ENCODE measurements at regions of chr16 and their contacts with region 1.

Region 1: GRCh38 chr16:67537270-67537635 is 8.6 kb downstream of the RIPOR1 start:
- DNase-seq: peak in 4 of 5 donors; percentile 37 to 71 (median 49)
- H3K4me3 ChIP-seq: peak overlapping the region; percentile 60
- H3K4me3 Mint-ChIP-seq: peak overlapping the region; percentile 85 to 93 (median 86)
- H3K27ac ChIP-seq: peak overlapping the region; percentile 47
- H3K27ac Mint-ChIP-seq: peak overlapping the region; percentile 74 to 92 (median 91)
- H3K4me1 ChIP-seq: peaks cover 24% of the 10 kb centered on the region
- H3K4me1 Mint-ChIP-seq: peaks cover 22 to 44% (median 27%) of the 10 kb centered on the region in 3 donors
- H3K27me3 ChIP-seq: no peaks in the 10 kb centered on the region
- H3K27me3 Mint-ChIP-seq: peaks cover 0 to 6% of the 10 kb centered on the region in 2 donors

Region 2: GRCh38 chr16:66444049-66444481 is 1093.2 kb before region 1 on chr16:
- CTCF ChIA-PET with region 1: no interaction called
- POLR2A ChIA-PET with region 1: interaction called, 15 read pairs
- DNase-seq: no peak
- H3K4me3 ChIP-seq: no peak overlapping the region
- H3K4me3 Mint-ChIP-seq: no peak overlapping the region
- H3K27ac ChIP-seq: no peak overlapping the region
- H3K27ac Mint-ChIP-seq: peak overlapping the region in 1 of 8 donors; percentile 11
- H3K4me1 ChIP-seq: no peaks in the 10 kb centered on the region
- H3K4me1 Mint-ChIP-seq: no peaks in the 10 kb centered on the region
- H3K27me3 ChIP-seq: peaks cover 10% of the 10 kb centered on the region
- H3K27me3 Mint-ChIP-seq: peaks cover 9 to 50% of the 10 kb centered on the region in 2 donors

Region 3: GRCh38 chr16:67598527-67598926 is 61.3 kb after region 1 on chr16:
- CTCF ChIA-PET with region 1: no interaction called
- POLR2A ChIA-PET with region 1: no interaction called
- DNase-seq: no peak
- H3K4me3 ChIP-seq: no peak overlapping the region
- H3K4me3 Mint-ChIP-seq: no peak overlapping the region
- H3K27ac ChIP-seq: no peak overlapping the region
- H3K27ac Mint-ChIP-seq: peak overlapping the region in 2 of 8 donors; percentile 30 to 70
- H3K4me1 ChIP-seq: peaks cover 11% of the 10 kb centered on the region
- H3K4me1 Mint-ChIP-seq: peaks cover 36 to 64% (median 57%) of the 10 kb centered on the region in 3 donors
- H3K27me3 ChIP-seq: no peaks in the 10 kb centered on the region
- H3K27me3 Mint-ChIP-seq: no peaks in the 10 kb centered on the region